CD14-positive monocyte (primary cell): ENCODE measurements at regions of chr9 and their contacts with region 1.

Region 1: GRCh38 chr9:124940693-124941453 is at the start of gene GOLGA1:
- DNase-seq: peak; percentile 94 to 96 (median 96)
- H3K4me3 ChIP-seq: peak within 1 kb of the TSS; percentile 86 to 94 (median 88)
- H3K4me3 Mint-ChIP-seq: peak within 1 kb of the TSS; percentile 94 to 99
- H3K27ac ChIP-seq: peak within 1 kb of the TSS; percentile 90 to 99
- H3K27ac Mint-ChIP-seq: peak within 1 kb of the TSS; percentile 95 to 99 (median 99)
- H3K4me1 ChIP-seq: peaks cover 14 to 16% of the 10 kb centered on the region in 2 donors
- H3K4me1 Mint-ChIP-seq: peaks cover 28% of the 10 kb centered on the region
- H3K27me3 ChIP-seq: no peaks in the 10 kb centered on the region
- H3K27me3 Mint-ChIP-seq: no peaks in the 10 kb centered on the region
- CTCF ChIP-seq: no peak
- polyA plus RNA-seq, gene GOLGA1: 3.1 to 15.7 (median 8.0) TPM

Region 2: GRCh38 chr9:124771021-124771866 is 169.6 kb before region 1 on chr9 and contains the start of gene NR6A1:
- intact Hi-C with region 1: loop called (anchors 5 to 10 kb)
- DNase-seq: peak; percentile 92 to 94 (median 93)
- H3K4me3 ChIP-seq: peak within 1 kb of the TSS; percentile 74 to 97 (median 95)
- H3K4me3 Mint-ChIP-seq: peak within 1 kb of the TSS; percentile 96 to 99
- H3K27ac ChIP-seq: peak within 1 kb of the TSS; percentile 46 to 91
- H3K27ac Mint-ChIP-seq: peak within 1 kb of the TSS; percentile 92 to 98 (median 97)
- H3K4me1 ChIP-seq: peaks cover 43 to 73% of the 10 kb centered on the region in 2 donors
- H3K4me1 Mint-ChIP-seq: peaks cover 70% of the 10 kb centered on the region
- H3K27me3 ChIP-seq: peaks cover 0 to 16% of the 10 kb centered on the region in 2 donors
- H3K27me3 Mint-ChIP-seq: peaks cover 17 to 31% (median 24%) of the 10 kb centered on the region in 3 donors
- CTCF ChIP-seq: no peak
- polyA plus RNA-seq, gene NR6A1: 0.15 to 2.9 (median 0.28) TPM

Region 3: GRCh38 chr9:124861342-124862229 is 79.3 kb before region 1 on chr9 and contains the starts of genes ARPC5L and RPL35:
- intact Hi-C with region 1: loop called (anchors 5 kb)
- DNase-seq: peak; percentile 91 to 93 (median 92)
- H3K4me3 ChIP-seq: peak within 1 kb of the TSS; percentile 79 to 90 (median 83)
- H3K4me3 Mint-ChIP-seq: peak within 1 kb of the TSS; percentile 90 to 96
- H3K27ac ChIP-seq: peak within 1 kb of the TSS; percentile 90 to 91
- H3K27ac Mint-ChIP-seq: peak within 1 kb of the TSS; percentile 85 to 96 (median 94)
- H3K4me1 ChIP-seq: peaks cover 26 to 30% of the 10 kb centered on the region in 2 donors
- H3K4me1 Mint-ChIP-seq: peaks cover 34% of the 10 kb centered on the region
- H3K27me3 ChIP-seq: no peaks in the 10 kb centered on the region
- H3K27me3 Mint-ChIP-seq: peaks cover 0 to 2% (median 0%) of the 10 kb centered on the region in 3 donors
- CTCF ChIP-seq: peak; percentile 55
- polyA plus RNA-seq, gene ARPC5L: 16.0 to 35.2 (median 20.7) TPM
- polyA plus RNA-seq, gene RPL35: 660 to 1,209 (median 828) TPM

Region 4: GRCh38 chr9:125374443-125375309 is 433.8 kb after region 1 on chr9:
- intact Hi-C with region 1: no loop called
- DNase-seq: peak; percentile 50 to 62 (median 51)
- H3K4me3 ChIP-seq: peak overlapping the region in 1 of 3 experiments; percentile 29
- H3K4me3 Mint-ChIP-seq: peak overlapping the region; percentile 70 to 81
- H3K27ac ChIP-seq: no peak overlapping the region
- H3K27ac Mint-ChIP-seq: no peak overlapping the region
- H3K4me1 ChIP-seq: peaks cover 6 to 9% of the 10 kb centered on the region in 2 donors
- H3K4me1 Mint-ChIP-seq: peaks cover 10% of the 10 kb centered on the region
- H3K27me3 ChIP-seq: peaks cover 0 to 5% of the 10 kb centered on the region in 2 donors
- H3K27me3 Mint-ChIP-seq: peaks cover 2 to 15% (median 4%) of the 10 kb centered on the region in 3 donors
- CTCF ChIP-seq: peak; percentile 79